Activated CD4-positive, alpha-beta memory T cell treated with anti-CD3 and anti-CD28 coated beads for 36 hours (primary cell): ENCODE measurements at regions of chr3 and their contacts with region 1.

Region 1: GRCh38 chr3:134485718-134486576 is at the starts of genes ANAPC13 and CEP63:
- DNase-seq: peak; percentile 95
- H3K4me3 Mint-ChIP-seq: peak within 1 kb of the TSS; percentile 87
- H3K27ac Mint-ChIP-seq: peak within 1 kb of the TSS; percentile 97
- H3K4me1 Mint-ChIP-seq: peaks cover 46% of the 10 kb centered on the region
- H3K27me3 Mint-ChIP-seq: no peaks in the 10 kb centered on the region
- total RNA-seq, gene ANAPC13: 30.1 to 33.1 TPM
- total RNA-seq, gene CEP63: 22.4 to 23.7 TPM

Region 2: DNA sequence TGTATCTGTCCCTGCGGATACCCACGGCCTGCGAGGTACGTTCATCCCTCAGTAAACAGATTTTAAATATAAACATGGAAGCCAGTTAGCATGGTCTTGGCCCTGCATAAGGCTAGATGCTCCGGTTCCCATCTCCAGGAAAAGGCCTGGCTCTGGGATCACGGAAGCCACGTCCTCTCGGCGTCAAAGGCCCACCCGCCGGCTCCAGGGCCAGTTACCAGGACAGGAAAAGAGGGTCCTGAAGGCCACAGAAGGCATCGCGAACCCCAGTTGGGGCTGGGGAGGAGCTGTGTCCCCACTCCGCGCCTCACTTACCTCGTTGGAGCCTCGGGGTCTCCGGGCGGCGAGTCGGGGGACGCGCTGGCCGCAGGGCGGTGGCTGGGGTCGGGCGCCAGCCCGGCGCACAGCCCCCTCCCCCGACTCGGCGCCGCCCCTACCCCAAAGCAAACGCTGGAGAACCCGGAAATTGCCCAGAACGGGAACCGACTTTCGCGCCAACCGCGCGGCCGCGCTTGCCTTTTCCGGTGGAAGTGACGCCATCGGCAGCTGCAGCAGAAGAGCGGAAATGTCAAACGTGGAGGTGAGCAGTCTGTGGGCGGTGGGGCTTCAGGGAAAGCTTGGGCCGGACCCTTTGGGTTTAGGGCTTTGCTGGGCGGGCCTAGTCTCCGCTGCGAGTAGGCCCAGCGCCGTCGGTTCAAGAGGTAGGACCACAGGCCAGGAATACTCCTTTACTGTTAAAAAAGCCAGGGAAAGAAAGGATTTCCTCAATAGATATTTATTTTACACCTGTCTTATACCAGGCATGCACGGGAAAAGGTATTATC is 824.3 kb before region 1 on chr3 and contains the start of gene TOPBP1:
- CTCF ChIA-PET with region 1: no interaction called
- POLR2A ChIA-PET with region 1: no interaction called
- intact Hi-C with region 1: loop called (anchors 2 kb)
- DNase-seq: peak; percentile 94
- H3K4me3 Mint-ChIP-seq: peak within 1 kb of the TSS; percentile 98
- H3K27ac Mint-ChIP-seq: peak within 1 kb of the TSS; percentile 98
- H3K4me1 Mint-ChIP-seq: peaks cover 32% of the 10 kb centered on the region
- H3K27me3 Mint-ChIP-seq: no peaks in the 10 kb centered on the region
- total RNA-seq, gene TOPBP1: 73.9 to 79.1 TPM

Region 3: DNA sequence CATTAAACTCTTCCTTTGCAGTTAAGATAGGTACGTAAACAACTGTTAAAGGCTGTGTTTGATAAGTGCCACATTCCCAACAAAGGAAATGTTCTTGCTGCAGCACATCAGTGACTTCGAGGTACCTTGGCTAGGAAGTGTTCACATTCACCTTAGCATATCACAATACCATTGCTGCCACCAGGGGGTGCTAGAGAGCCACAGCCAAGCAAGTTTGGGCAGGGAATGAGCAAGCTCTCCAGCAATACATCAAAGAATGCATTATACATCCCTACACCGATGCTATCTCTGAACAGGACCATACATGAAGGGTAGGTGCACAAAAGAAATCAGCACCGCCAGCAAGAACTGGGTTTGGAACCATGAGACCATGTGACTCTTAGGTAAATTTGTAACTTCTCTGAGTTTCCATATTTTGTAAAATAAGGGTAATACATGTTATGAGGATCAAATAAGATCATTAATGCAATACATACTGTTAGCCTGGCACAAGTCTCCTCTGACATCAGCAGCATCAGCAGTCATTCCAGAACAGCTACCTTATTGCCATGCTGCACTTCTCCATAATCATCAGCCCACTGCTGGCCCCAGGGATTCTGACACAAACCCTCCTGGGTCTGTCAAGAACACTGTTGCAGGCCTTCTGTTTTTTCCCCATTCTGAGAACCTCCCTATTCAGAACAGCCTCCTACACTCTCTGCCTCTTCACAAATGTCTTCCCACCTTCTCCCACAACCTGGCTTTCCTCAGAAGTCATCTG is 272.9 kb before region 1 on chr3:
- CTCF ChIA-PET with region 1: interaction called, 38 read pairs
- POLR2A ChIA-PET with region 1: no interaction called
- intact Hi-C with region 1: loop called (anchors 5 kb)
- DNase-seq: peak; percentile 90
- H3K4me3 Mint-ChIP-seq: no peak overlapping the region
- H3K27ac Mint-ChIP-seq: no peak overlapping the region
- H3K4me1 Mint-ChIP-seq: peaks cover 23% of the 10 kb centered on the region
- H3K27me3 Mint-ChIP-seq: no peaks in the 10 kb centered on the region

Region 4: DNA sequence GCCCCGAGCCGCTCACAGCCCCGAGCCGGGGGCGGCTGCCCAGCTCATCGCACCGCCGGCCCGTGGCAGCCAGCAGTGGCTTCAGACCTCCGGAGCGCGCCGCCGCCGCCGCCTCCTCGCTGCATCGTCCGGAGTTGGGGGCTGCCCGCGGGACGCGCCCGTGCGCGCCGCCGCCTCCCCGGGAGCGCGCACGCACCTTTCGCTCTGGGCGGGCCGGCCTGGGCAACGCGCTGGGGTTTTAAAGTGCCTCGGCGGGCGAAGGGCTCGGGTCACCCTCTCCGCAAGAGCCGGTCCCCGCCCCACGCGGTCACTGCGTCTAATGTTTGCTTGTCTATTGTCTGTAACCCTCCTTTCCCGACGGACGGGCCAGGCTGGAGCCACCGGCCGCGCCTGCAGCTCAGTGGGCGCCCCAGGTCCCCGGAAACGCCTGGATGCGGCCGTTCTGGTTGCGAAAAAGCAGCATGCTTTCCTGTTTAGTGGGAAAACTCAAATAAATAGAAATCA is 235.2 kb before region 1 on chr3 and contains the start of gene RYK:
- CTCF ChIA-PET with region 1: no interaction called
- POLR2A ChIA-PET with region 1: interaction called, 7 read pairs
- intact Hi-C with region 1: loop called (anchors 1 kb)
- DNase-seq: peak; percentile 82
- H3K4me3 Mint-ChIP-seq: peak within 1 kb of the TSS; percentile 90
- H3K27ac Mint-ChIP-seq: peak within 1 kb of the TSS; percentile 85
- H3K4me1 Mint-ChIP-seq: peaks cover 56% of the 10 kb centered on the region
- H3K27me3 Mint-ChIP-seq: peaks cover 5% of the 10 kb centered on the region
- total RNA-seq, gene RYK: 16.7 to 17.6 TPM

Region 5: GRCh38 chr3:134308350-134308891 is 177.5 kb before region 1 on chr3:
- CTCF ChIA-PET with region 1: interaction called, 176 read pairs
- POLR2A ChIA-PET with region 1: interaction called, 4 read pairs
- intact Hi-C with region 1: no loop called
- DNase-seq: peak; percentile 84
- H3K4me3 Mint-ChIP-seq: no peak overlapping the region
- H3K27ac Mint-ChIP-seq: no peak overlapping the region
- H3K4me1 Mint-ChIP-seq: peaks cover 2% of the 10 kb centered on the region
- H3K27me3 Mint-ChIP-seq: peaks cover 36% of the 10 kb centered on the region

Region 6: GRCh38 chr3:134473868-134474546 is 11.9 kb before region 1 on chr3:
- CTCF ChIA-PET with region 1: interaction called, 23 read pairs
- POLR2A ChIA-PET with region 1: interaction called, 5 read pairs
- intact Hi-C with region 1: no loop called
- DNase-seq: peak; percentile 79
- H3K4me3 Mint-ChIP-seq: no peak overlapping the region
- H3K27ac Mint-ChIP-seq: no peak overlapping the region
- H3K4me1 Mint-ChIP-seq: no peaks in the 10 kb centered on the region
- H3K27me3 Mint-ChIP-seq: no peaks in the 10 kb centered on the region

Region 7: GRCh38 chr3:134567605-134568004 is 81.7 kb after region 1 on chr3:
- CTCF ChIA-PET with region 1: no interaction called
- POLR2A ChIA-PET with region 1: no interaction called
- intact Hi-C with region 1: no loop called
- DNase-seq: no peak
- H3K4me3 Mint-ChIP-seq: no peak overlapping the region
- H3K27ac Mint-ChIP-seq: no peak overlapping the region
- H3K4me1 Mint-ChIP-seq: no peaks in the 10 kb centered on the region
- H3K27me3 Mint-ChIP-seq: no peaks in the 10 kb centered on the region

Region 8: GRCh38 chr3:134985864-134986715 is 500.1 kb after region 1 on chr3:
- CTCF ChIA-PET with region 1: no interaction called
- POLR2A ChIA-PET with region 1: no interaction called
- intact Hi-C with region 1: no loop called
- DNase-seq: no peak
- H3K4me3 Mint-ChIP-seq: no peak overlapping the region
- H3K27ac Mint-ChIP-seq: no peak overlapping the region
- H3K4me1 Mint-ChIP-seq: no peaks in the 10 kb centered on the region
- H3K27me3 Mint-ChIP-seq: peaks cover 1% of the 10 kb centered on the region

Region 9: GRCh38 chr3:136196401-136197158 is 1710.6 kb after region 1 on chr3:
- CTCF ChIA-PET with region 1: no interaction called
- POLR2A ChIA-PET with region 1: no interaction called
- intact Hi-C with region 1: loop called (anchors 10 kb)
- DNase-seq: peak; percentile 100
- H3K4me3 Mint-ChIP-seq: peak overlapping the region; percentile 95
- H3K27ac Mint-ChIP-seq: peak overlapping the region; percentile 99
- H3K4me1 Mint-ChIP-seq: peaks cover 18% of the 10 kb centered on the region
- H3K27me3 Mint-ChIP-seq: peaks cover 5% of the 10 kb centered on the region